ENCODE measurements at regions of chr7 and their contacts with region 1.

Region 1: GRCh38 chr7:129218514-129219062 is 6.2 kb upstream of the AHCYL2 start:
- DNase-seq: peak; percentile 61
- ATAC-seq: peak; percentile 83
- H3K4me3 Mint-ChIP-seq: no peak overlapping the region
- H3K27ac Mint-ChIP-seq: no peak overlapping the region
- H3K4me1 Mint-ChIP-seq: peaks cover 15% of the 10 kb centered on the region
- H3K27me3 Mint-ChIP-seq: no peaks in the 10 kb centered on the region
- CTCF ChIP-seq: peak; percentile 32

Region 2: DNA sequence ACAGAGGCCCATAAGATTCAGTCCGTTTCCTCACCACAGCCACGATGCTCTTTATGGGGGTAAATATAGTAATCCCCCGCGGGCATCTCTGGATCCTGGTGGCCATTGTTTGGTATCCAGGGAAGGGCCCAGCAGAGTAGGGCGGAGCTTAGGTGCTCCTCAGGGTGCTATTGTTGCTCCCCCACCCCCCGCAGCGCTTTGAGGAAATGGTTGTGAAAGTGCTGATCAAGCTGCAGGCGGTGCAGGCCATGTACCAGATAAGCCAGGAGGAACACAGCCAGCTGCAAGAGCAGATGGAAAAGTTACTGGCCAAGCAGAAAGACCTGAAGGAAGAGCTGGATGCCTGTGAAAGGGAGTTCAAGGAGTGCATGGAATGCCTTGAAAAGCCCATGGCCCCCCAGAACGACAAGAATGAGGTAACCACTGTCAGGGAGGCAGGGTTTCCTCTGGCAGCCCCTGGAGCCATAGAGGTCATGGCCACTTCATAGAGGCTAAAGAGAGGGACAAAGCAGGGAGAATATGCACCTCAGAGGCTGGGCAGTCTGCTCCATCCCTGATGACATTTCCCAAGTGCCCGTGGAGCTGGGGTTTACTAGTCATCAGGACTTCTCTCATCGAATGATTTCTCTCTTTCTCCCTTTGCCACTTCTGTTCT is 405.9 kb before region 1 on chr7:
- CTCF ChIA-PET with region 1: no interaction called
- POLR2A ChIA-PET with region 1: no interaction called
- intact Hi-C with region 1: no loop called
- DNase-seq: no peak
- ATAC-seq: no peak
- H3K4me3 Mint-ChIP-seq: no peak overlapping the region
- H3K27ac Mint-ChIP-seq: no peak overlapping the region
- H3K4me1 Mint-ChIP-seq: no peaks in the 10 kb centered on the region
- H3K27me3 Mint-ChIP-seq: no peaks in the 10 kb centered on the region
- CTCF ChIP-seq: no peak

Region 3: DNA sequence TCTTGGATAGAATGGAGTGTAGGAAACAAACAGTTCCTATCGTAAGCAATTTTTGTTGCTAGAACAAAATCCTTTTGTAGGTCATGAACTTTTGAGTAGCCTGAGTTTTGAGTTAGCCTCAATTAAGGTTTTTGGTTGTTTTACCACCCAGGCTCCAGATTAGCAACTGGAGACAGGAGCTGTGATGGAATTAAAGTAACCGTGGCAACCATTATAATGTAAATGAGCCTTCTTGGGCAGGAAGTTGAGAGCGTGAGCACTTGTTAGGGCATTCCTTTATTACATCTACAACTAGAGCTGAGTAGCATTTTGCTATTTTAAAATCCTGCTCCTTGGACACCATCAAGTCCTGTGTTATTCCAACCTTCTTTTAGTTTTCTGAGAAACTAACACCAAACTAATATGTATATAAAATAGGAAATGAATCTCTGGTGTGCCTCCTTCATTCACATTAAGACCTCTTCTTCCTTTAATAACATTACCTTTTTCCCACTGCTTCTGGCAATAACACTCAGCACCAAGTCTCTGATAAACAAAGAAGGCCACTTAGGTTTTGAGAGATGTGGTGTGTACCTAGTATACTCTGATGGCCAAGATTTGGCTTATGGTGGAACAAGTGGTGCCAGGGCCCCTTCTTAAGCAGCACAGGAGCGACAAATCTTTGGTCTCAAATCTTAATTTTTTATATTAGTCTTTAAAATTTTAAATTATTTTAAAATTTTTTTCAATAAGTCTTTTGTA is 40.2 kb after region 1 on chr7:
- CTCF ChIA-PET with region 1: interaction called, 14 read pairs
- POLR2A ChIA-PET with region 1: no interaction called
- intact Hi-C with region 1: no loop called
- DNase-seq: no peak
- ATAC-seq: no peak
- H3K4me3 Mint-ChIP-seq: no peak overlapping the region
- H3K27ac Mint-ChIP-seq: no peak overlapping the region
- H3K4me1 Mint-ChIP-seq: peaks cover 26% of the 10 kb centered on the region
- H3K27me3 Mint-ChIP-seq: no peaks in the 10 kb centered on the region
- CTCF ChIP-seq: no peak

Region 4: DNA sequence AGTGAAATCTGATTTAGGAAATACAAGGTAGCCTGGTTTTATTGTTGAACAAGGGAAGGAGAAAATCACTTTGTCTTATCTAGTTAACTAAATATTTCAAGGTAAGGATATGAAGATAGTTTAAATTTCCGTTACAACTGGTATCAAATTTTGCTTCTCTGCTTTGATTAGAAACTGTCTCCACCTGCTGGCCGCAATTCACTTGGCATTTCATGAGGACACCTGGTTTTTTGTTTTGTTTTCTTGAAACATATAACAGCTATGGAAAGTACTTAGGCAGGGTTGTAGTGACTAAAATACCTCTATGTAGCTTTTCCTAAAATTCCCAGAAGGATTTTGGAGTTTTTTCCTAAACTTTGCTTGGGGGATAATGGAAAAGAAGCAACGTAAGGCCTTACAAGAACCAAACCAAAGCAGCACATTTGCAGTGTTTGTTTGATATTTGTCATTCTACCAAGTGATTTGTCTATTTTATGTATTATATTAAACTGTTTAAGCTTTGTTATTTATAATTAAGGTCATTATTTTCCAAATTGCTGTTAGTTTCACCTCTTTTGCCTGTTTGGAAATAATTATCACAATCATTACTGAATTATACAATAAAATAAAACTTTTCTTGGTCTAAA is 79.8 kb after region 1 on chr7:
- CTCF ChIA-PET with region 1: interaction called, 157 read pairs
- POLR2A ChIA-PET with region 1: interaction called, 6 read pairs
- intact Hi-C with region 1: loop called (anchors 1 kb)
- DNase-seq: no peak
- ATAC-seq: no peak
- H3K4me3 Mint-ChIP-seq: no peak overlapping the region
- H3K27ac Mint-ChIP-seq: no peak overlapping the region
- H3K4me1 Mint-ChIP-seq: no peaks in the 10 kb centered on the region
- H3K27me3 Mint-ChIP-seq: no peaks in the 10 kb centered on the region
- CTCF ChIP-seq: peak; percentile 64

Region 5: GRCh38 chr7:129376076-129376777 is 157.6 kb after region 1 on chr7:
- CTCF ChIA-PET with region 1: interaction called, 17 read pairs
- POLR2A ChIA-PET with region 1: no interaction called
- intact Hi-C with region 1: loop called (anchors 1 kb)
- DNase-seq: no peak
- ATAC-seq: peak; percentile 70
- H3K4me3 Mint-ChIP-seq: no peak overlapping the region
- H3K27ac Mint-ChIP-seq: no peak overlapping the region
- H3K4me1 Mint-ChIP-seq: peaks cover 6% of the 10 kb centered on the region
- H3K27me3 Mint-ChIP-seq: no peaks in the 10 kb centered on the region
- CTCF ChIP-seq: no peak

Region 6: DNA sequence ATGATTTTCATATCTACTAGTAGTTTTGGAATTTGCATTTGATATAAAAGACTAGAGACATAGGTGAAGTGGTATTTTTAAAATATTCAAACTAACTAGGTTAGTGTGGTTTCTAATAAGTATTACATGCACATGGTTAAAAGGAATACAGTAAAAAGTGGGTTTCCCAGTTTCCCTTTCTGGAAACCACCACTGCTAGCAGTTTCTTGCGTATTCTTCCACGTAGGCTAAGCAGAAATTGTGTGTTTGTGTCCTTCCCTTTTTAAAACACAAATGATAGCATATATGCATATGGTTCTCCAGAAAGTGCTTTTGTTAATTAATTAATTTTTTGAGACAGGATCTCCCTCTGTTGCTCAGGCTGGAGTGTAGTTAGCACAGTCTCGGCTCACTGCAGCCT is 408.3 kb after region 1 on chr7:
- CTCF ChIA-PET with region 1: no interaction called
- POLR2A ChIA-PET with region 1: no interaction called
- intact Hi-C with region 1: no loop called
- DNase-seq: no peak
- ATAC-seq: no peak
- H3K4me3 Mint-ChIP-seq: no peak overlapping the region
- H3K27ac Mint-ChIP-seq: no peak overlapping the region
- H3K4me1 Mint-ChIP-seq: peaks cover 50% of the 10 kb centered on the region
- H3K27me3 Mint-ChIP-seq: no peaks in the 10 kb centered on the region
- CTCF ChIP-seq: no peak

Region 7: DNA sequence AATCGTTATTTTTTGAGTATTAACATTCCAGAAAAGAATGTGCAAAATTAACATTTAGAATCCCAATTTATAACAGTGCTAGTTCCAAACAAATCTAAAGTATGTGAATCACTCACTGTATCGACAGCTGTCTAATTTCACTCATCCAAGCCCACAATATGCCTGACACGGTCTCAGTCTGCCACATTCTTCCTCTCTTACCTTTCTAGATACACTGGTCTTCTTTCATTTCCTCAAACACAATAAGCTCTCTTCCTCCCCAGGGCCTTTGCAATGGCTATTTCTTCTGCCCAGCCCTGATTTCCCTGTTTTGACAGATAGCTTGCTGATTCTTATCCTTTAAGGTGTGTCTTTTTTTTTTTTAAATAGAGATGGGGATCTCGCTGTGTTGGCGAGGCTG is 685.3 kb after region 1 on chr7:
- CTCF ChIA-PET with region 1: no interaction called
- POLR2A ChIA-PET with region 1: no interaction called
- intact Hi-C with region 1: no loop called
- DNase-seq: no peak
- ATAC-seq: peak; percentile 97
- H3K4me3 Mint-ChIP-seq: peak overlapping the region; percentile 21
- H3K27ac Mint-ChIP-seq: peak overlapping the region; percentile 57
- H3K4me1 Mint-ChIP-seq: peaks cover 86% of the 10 kb centered on the region
- H3K27me3 Mint-ChIP-seq: no peaks in the 10 kb centered on the region
- CTCF ChIP-seq: no peak